ENCODE measurements at regions of chr14 and their contacts with region 1.

Region 1: GRCh38 chr14:90276646-90277367 is 20.5 kb downstream of the PSMC1 start:
- DNase-seq: peak; percentile 46
- ATAC-seq: peak; percentile 60
- H3K4me3 Mint-ChIP-seq: no peak overlapping the region
- H3K27ac Mint-ChIP-seq: peak overlapping the region; percentile 89
- H3K4me1 Mint-ChIP-seq: 0 out of 2 replicates have a peak, but pooled peaks cover 2% of the 10 kb centered on the region
- H3K27me3 Mint-ChIP-seq: no peaks in the 10 kb centered on the region
- CTCF ChIP-seq: no peak

Region 2: DNA sequence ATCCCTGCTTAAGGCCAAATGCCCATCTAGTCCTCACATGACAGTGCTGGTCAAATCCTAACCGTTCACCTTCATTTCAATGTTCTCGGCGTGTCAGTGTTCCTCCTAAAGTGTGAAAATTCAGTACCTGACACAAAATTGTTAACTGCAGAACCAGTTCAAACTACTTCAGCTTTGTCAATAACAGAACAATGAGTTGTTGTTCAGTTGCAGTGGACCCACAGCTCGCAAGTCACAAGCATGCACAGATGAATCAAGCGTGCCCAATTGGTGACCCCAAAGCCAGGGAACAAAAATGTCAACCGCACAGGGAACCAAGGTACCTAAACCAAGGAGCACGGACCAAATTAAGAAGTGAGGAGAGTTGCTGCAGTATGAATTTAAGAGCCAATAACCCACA is 31.8 kb after region 1 on chr14:
- CTCF ChIA-PET with region 1: interaction called, 10 read pairs
- POLR2A ChIA-PET with region 1: no interaction called
- DNase-seq: no peak
- ATAC-seq: no peak
- H3K4me3 Mint-ChIP-seq: no peak overlapping the region
- H3K27ac Mint-ChIP-seq: peak overlapping the region; percentile 50; the same call in 1 of the 2 replicates
- H3K4me1 Mint-ChIP-seq: peaks cover 23% of the 10 kb centered on the region
- H3K27me3 Mint-ChIP-seq: no peaks in the 10 kb centered on the region
- CTCF ChIP-seq: no peak